Gastrocnemius medialis (tissue), 4 donors: ENCODE measurements at regions of chr2 and their contacts with region 1.

Region 1: DNA sequence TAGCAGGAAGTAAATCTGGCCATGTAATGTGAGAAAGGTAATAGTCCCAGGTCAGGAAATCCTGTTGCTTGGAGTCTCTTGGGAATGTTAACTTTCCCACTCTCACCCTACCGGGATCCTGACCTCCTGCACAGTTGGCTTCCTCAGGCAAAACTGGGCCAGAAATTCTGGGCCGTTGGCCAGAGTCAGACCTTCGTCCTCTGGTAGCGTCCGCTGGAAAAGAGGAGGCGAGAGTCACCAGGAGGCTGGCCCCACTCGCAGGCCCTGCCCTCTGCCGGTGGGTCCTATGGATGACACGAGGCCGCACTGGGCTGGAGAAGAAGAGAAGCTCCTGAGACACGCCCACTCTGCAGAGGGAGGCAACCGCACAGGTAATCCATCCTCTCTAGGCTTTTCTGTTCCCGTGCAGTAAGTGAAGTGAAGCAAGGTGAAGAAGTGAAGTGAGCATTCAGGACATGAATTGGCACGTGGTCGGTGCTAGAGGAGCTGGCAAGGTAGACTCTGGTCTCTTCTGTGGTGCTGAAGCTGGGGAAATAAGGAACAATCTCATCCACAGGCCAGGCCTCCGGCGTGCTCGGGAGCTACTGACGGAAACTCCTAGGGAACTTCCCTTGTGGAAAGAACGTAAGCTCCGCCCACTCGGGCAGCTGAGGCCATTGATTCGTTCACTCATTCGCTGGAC is 182.7 kb upstream of the GLI2 start:
- DNase-seq: peak; percentile 91 to 97
- ATAC-seq: peak; percentile 77 to 86
- H3K4me3 ChIP-seq: no peak overlapping the region
- H3K27ac ChIP-seq: peak overlapping the region; percentile 65 to 83 (median 76)
- H3K4me1 ChIP-seq: peaks cover 39 to 55% of the 10 kb centered on the region in 2 donors
- H3K27me3 ChIP-seq: no peaks in the 10 kb centered on the region
- CTCF ChIP-seq: peak; percentile 90 to 94 (median 92)
- POLR2A ChIP-seq: peak in 1 of 2 donors; percentile 39

Region 2: DNA sequence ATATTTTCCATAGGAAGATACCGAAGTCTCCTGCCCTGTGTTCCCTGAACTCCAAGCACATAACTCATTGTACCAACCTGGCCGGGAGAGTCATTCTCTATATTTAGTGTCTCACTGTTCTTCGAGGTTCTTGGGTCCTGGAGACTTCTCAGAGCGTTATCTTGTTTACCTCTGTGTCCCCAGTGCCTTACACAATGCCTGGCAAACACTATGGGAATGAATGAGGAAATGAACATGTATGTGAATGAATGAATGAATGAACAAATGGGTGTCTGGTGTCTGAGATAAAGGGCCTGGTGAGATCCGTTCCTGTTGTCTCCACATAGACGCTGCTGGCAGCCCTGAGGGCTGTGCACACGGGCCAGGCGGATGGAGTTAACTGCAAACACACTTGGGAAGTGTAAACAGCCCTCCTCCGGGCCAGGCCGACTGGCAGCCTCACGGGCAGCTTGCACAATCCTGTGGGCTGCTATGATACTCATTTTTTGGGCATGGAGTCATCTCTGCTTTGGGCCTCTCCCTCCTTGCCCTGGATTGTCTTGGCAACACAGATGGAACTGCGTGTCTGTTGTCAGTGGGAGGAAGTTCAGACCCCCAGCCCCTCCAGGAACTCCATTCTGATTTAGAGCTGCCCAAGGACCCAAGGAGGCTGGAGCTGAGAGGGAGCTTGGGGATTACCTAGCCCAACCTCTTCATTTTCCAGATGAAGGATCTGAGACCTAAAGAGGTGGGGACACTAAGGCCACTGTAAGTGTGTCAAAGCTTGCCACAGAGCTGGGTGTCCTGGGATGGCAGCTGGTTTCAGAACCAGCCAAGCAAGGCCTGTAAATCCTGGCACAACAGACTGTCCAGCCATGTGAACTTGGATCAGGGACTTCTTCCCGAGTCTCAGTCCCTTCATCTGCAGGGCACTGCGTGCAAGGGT is 82.6 kb before region 1 on chr2:
- in situ Hi-C with region 1: no loop called
- intact Hi-C with region 1: loop called (anchors 1 kb)
- DNase-seq: peak; percentile 93 to 95
- ATAC-seq: peak; percentile 89 to 90
- H3K4me3 ChIP-seq: no peak overlapping the region
- H3K27ac ChIP-seq: peak overlapping the region; percentile 84 to 98 (median 93)
- H3K4me1 ChIP-seq: peaks cover 27 to 30% of the 10 kb centered on the region in 2 donors
- H3K27me3 ChIP-seq: no peaks in the 10 kb centered on the region
- CTCF ChIP-seq: no peak
- POLR2A ChIP-seq: peak in 1 of 2 donors; percentile 31

Region 3: GRCh38 chr2:120531863-120532600 is 20.9 kb before region 1 on chr2:
- in situ Hi-C with region 1: no loop called
- intact Hi-C with region 1: loop called (anchors 2 kb)
- DNase-seq: peak; percentile 93 to 94
- ATAC-seq: peak; percentile 92 to 95
- H3K4me3 ChIP-seq: no peak overlapping the region
- H3K27ac ChIP-seq: peak overlapping the region; percentile 85 to 92 (median 88)
- H3K4me1 ChIP-seq: peaks cover 25 to 37% of the 10 kb centered on the region in 2 donors
- H3K27me3 ChIP-seq: no peaks in the 10 kb centered on the region
- CTCF ChIP-seq: peak in 3 of 5 experiments; percentile 10 to 27 (median 21)
- POLR2A ChIP-seq: peak; percentile 21 to 33

Region 4: DNA sequence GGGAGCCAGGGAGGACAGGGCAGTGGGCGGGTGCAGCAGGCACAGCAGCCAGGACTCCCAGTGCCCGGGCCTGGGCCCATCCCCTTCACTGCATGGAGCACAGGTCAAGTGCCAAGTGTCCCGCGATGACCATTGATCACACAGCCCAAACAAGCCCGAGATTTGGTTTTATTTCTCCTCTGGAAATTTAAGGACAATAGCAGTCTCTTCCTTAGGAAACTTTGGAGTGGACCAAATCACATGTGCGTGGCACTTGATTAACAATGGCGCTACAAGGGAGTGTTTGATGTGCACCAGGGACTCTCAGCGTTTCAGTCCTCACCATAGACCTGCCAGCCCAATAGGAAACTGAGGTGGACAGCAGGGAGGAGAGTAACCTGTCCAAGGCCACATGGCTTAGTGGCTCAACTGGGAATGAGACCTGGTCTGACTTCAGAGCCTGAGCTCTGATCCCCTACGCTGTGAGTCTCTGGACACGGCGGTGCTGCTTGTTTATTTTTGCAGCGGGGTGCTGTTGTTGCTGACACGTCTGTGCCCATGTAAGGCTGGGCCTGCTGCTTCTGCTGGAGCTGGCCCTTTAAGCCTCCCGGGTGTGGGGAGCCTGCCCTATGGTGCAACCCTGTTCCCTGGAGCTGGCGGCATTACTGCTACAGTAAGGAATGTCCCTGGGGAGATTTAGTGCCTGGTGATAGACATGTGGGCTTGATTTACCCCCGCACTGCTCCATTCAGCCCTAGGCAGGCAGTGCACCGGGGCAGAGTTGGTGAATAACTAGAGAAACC is 12.8 kb before region 1 on chr2:
- in situ Hi-C with region 1: no loop called
- intact Hi-C with region 1: loop called (anchors 1 kb)
- DNase-seq: peak; percentile 96 to 98
- ATAC-seq: peak; percentile 73 to 78
- H3K4me3 ChIP-seq: peak overlapping the region in 1 of 4 donors; percentile 36
- H3K27ac ChIP-seq: peak overlapping the region; percentile 96 to 100 (median 98)
- H3K4me1 ChIP-seq: peaks cover 48 to 49% of the 10 kb centered on the region in 2 donors
- H3K27me3 ChIP-seq: no peaks in the 10 kb centered on the region
- CTCF ChIP-seq: no peak
- POLR2A ChIP-seq: peak; percentile 65 to 86

Region 5: GRCh38 chr2:120914839-120915521 is 362.0 kb after region 1 on chr2:
- in situ Hi-C with region 1: no loop called
- intact Hi-C with region 1: loop called (anchors 5 kb)
- DNase-seq: peak; percentile 88 to 91
- ATAC-seq: peak; percentile 93 to 95
- H3K4me3 ChIP-seq: no peak overlapping the region
- H3K27ac ChIP-seq: peak overlapping the region; percentile 31 to 63 (median 49)
- H3K4me1 ChIP-seq: peaks cover 25 to 32% of the 10 kb centered on the region in 2 donors
- H3K27me3 ChIP-seq: no peaks in the 10 kb centered on the region
- CTCF ChIP-seq: peak in 4 of 5 experiments; percentile 21 to 47 (median 36)
- POLR2A ChIP-seq: no peak

Region 6: DNA sequence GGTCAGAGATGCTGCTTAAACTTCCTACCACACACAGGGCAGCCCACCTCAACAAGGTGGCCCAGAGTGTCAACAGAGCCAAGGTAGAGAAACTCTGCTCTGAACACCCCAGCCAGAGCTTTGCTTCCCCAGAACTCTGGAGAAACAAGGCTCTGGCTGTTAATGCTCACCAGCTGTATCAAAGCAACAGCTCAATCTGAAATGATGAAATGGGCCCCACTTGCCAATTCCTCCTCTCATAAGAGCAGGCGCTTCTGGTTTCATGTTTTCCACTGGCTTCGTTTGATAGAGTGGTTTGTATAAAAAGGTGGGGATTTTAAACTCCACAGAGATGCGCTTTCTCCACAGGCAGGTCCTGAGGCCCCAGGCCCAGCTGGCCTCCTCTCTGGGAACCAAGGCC is 792.9 kb after region 1 on chr2:
- in situ Hi-C with region 1: no loop called
- intact Hi-C with region 1: loop called (anchors 10 kb)
- DNase-seq: peak; percentile 49 to 66
- ATAC-seq: peak; percentile 74 to 84
- H3K4me3 ChIP-seq: no peak overlapping the region
- H3K27ac ChIP-seq: peak overlapping the region; percentile 74 to 80 (median 78)
- H3K4me1 ChIP-seq: peaks cover 9 to 28% of the 10 kb centered on the region in 2 donors
- H3K27me3 ChIP-seq: no peaks in the 10 kb centered on the region
- CTCF ChIP-seq: no peak
- POLR2A ChIP-seq: no peak